Activated CD8-positive, alpha-beta T cell treated with anti-CD3 and anti-CD28 coated beads for 36 hours (primary cell): ENCODE measurements at regions of chrX and their contacts with region 1.

Region 1: DNA sequence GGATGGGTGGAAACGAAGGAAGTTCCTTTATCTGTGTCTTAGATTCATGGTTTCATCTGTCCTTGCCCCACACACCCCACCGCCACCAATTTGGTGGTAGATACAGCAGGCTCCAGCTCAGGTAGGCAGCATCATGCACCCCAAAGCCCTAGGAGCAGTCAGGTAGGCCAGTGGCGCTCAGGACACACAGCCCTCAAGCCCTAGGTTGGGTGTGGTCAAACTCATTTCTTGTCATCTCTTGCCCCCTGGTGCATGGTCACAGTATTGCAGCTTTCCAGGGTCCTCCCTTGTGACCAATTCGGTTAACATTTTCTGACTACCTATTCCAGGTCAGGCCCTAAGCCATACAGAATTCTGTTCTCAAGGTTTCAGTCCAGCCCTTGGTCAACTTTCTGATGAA is 14.5 kb upstream of the PRRG3 start:
- DNase-seq: peak; percentile 67
- ATAC-seq: peak; percentile 72
- H3K4me3 Mint-ChIP-seq: no peak overlapping the region
- H3K27ac Mint-ChIP-seq: no peak overlapping the region
- H3K4me1 Mint-ChIP-seq: no peaks in the 10 kb centered on the region
- H3K27me3 Mint-ChIP-seq: peaks cover 1% of the 10 kb centered on the region
- CTCF ChIP-seq: peak; percentile 45

Region 2: GRCh38 chrX:151151665-151152267 is 529.0 kb before region 1 on chrX:
- CTCF ChIA-PET with region 1: interaction called, 9 read pairs
- POLR2A ChIA-PET with region 1: no interaction called
- intact Hi-C with region 1: loop called (anchors 2 kb)
- DNase-seq: peak; percentile 29
- ATAC-seq: peak; percentile 45
- H3K4me3 Mint-ChIP-seq: no peak overlapping the region
- H3K27ac Mint-ChIP-seq: no peak overlapping the region
- H3K4me1 Mint-ChIP-seq: no peaks in the 10 kb centered on the region
- H3K27me3 Mint-ChIP-seq: peaks cover 12% of the 10 kb centered on the region
- CTCF ChIP-seq: peak; percentile 58

Region 3: DNA sequence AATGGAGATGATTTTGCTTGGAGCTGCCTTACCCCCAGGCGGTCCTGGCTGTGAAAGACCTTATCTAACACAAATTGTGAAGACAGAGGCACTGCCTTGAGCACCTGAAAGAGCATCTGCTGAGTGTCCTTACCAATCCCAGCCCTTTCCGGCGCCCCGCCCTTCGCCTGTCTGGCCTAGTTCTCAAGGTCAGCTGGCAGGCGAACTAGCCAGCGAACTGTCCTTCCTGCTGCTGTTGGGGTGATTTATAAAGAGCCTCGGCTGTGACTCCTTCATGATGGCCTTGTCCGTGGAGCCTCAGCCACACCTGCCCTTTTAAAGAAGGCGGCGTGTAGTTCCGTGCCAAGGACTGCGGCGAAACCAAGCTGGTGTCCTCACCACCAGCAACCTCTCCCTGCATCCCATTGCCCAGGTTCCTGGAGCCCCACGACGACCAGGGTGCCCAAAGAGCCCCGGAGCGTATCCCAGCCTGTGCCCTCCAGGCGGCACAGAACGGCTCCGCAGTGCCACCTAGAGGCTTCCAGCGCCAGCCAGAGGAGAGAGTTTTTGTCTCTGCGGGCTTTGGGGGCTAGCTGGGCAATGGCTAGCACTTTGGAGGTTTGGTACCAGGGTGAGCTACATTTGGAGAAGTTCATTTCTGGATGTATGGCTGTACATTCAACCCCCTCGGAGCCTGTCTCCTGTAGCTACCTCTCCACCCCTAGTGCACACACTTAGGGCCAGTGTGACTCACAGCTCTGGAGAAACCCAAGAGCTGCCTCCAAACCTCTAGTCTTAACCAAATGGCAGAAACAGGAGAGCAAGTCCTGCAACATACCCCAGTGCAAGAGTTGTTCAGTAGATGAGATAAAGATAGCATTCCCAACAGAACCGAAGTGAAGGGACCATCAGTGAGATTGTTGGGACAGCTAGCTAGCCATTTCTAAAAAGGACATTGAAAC is 320.6 kb before region 1 on chrX:
- CTCF ChIA-PET with region 1: no interaction called
- POLR2A ChIA-PET with region 1: no interaction called
- intact Hi-C with region 1: loop called (anchors 5 kb)
- DNase-seq: peak; percentile 49
- ATAC-seq: peak; percentile 68
- H3K4me3 Mint-ChIP-seq: peak overlapping the region; percentile 31
- H3K27ac Mint-ChIP-seq: no peak overlapping the region
- H3K4me1 Mint-ChIP-seq: no peaks in the 10 kb centered on the region
- H3K27me3 Mint-ChIP-seq: peaks cover 13% of the 10 kb centered on the region
- CTCF ChIP-seq: peak; percentile 62

Region 4: GRCh38 chrX:151505796-151506195 is 175.0 kb before region 1 on chrX:
- CTCF ChIA-PET with region 1: no interaction called
- POLR2A ChIA-PET with region 1: no interaction called
- intact Hi-C with region 1: loop called (anchors 10 kb)
- DNase-seq: peak; percentile 40
- ATAC-seq: no peak
- H3K4me3 Mint-ChIP-seq: no peak overlapping the region
- H3K27ac Mint-ChIP-seq: no peak overlapping the region
- H3K4me1 Mint-ChIP-seq: no peaks in the 10 kb centered on the region
- H3K27me3 Mint-ChIP-seq: peaks cover 7% of the 10 kb centered on the region
- CTCF ChIP-seq: no peak

Region 5: GRCh38 chrX:151609222-151609621 is 71.6 kb before region 1 on chrX:
- CTCF ChIA-PET with region 1: no interaction called
- POLR2A ChIA-PET with region 1: no interaction called
- intact Hi-C with region 1: no loop called
- DNase-seq: no peak
- ATAC-seq: no peak
- H3K4me3 Mint-ChIP-seq: no peak overlapping the region
- H3K27ac Mint-ChIP-seq: no peak overlapping the region
- H3K4me1 Mint-ChIP-seq: no peaks in the 10 kb centered on the region
- H3K27me3 Mint-ChIP-seq: no peaks in the 10 kb centered on the region
- CTCF ChIP-seq: no peak

Region 6: GRCh38 chrX:151641564-151641963 is 39.2 kb before region 1 on chrX:
- CTCF ChIA-PET with region 1: no interaction called
- POLR2A ChIA-PET with region 1: no interaction called
- intact Hi-C with region 1: no loop called
- DNase-seq: no peak
- ATAC-seq: no peak
- H3K4me3 Mint-ChIP-seq: no peak overlapping the region
- H3K27ac Mint-ChIP-seq: no peak overlapping the region
- H3K4me1 Mint-ChIP-seq: no peaks in the 10 kb centered on the region
- H3K27me3 Mint-ChIP-seq: peaks cover 3% of the 10 kb centered on the region
- CTCF ChIP-seq: no peak

Region 7: GRCh38 chrX:151753313-151754041 is 72.7 kb after region 1 on chrX:
- CTCF ChIA-PET with region 1: no interaction called
- POLR2A ChIA-PET with region 1: no interaction called
- intact Hi-C with region 1: no loop called
- DNase-seq: peak; percentile 20
- ATAC-seq: peak; percentile 58
- H3K4me3 Mint-ChIP-seq: no peak overlapping the region
- H3K27ac Mint-ChIP-seq: no peak overlapping the region
- H3K4me1 Mint-ChIP-seq: no peaks in the 10 kb centered on the region
- H3K27me3 Mint-ChIP-seq: peaks cover 3% of the 10 kb centered on the region
- CTCF ChIP-seq: peak; percentile 41